Activated CD4-positive, alpha-beta T cell treated with anti-CD3 and anti-CD28 coated beads for 36 hours (primary cell): ENCODE measurements at regions of chr3 and their contacts with region 1.

Region 1: DNA sequence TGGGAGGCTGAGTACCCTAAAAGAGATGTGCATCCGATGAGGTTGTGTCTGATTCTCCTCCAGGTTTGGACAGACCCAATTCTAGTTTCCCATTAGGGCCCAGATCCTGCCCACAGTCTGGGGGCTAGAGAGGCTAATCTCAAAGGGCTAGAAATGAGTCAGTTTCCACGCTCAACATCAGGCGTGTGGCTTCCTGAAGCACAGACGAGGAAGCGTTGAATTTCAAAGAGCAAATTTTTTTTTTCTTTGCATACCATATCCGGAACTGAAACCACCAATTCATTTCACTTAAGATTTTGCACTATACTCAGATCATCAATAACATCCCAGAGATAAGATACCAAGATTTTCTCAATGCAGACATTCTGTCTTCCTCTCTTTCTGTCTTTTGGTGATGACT is 173.8 kb upstream of the BCL6 start:
- DNase-seq: peak; percentile 69
- ATAC-seq: peak; percentile 50
- H3K4me3 Mint-ChIP-seq: peak overlapping the region; percentile 59
- H3K27ac Mint-ChIP-seq: peak overlapping the region; percentile 86
- H3K4me1 Mint-ChIP-seq: peaks cover 70% of the 10 kb centered on the region
- H3K27me3 Mint-ChIP-seq: peaks cover 2% of the 10 kb centered on the region

Region 2: GRCh38 chr3:187777331-187777941 is 141.6 kb before region 1 on chr3:
- CTCF ChIA-PET with region 1: no interaction called
- POLR2A ChIA-PET with region 1: no interaction called
- intact Hi-C with region 1: loop called (anchors 1 kb)
- DNase-seq: peak; percentile 69
- ATAC-seq: peak; percentile 88
- H3K4me3 Mint-ChIP-seq: peak overlapping the region; percentile 27
- H3K27ac Mint-ChIP-seq: peak overlapping the region; percentile 92
- H3K4me1 Mint-ChIP-seq: peaks cover 38% of the 10 kb centered on the region
- H3K27me3 Mint-ChIP-seq: peaks cover 11% of the 10 kb centered on the region

Region 3: DNA sequence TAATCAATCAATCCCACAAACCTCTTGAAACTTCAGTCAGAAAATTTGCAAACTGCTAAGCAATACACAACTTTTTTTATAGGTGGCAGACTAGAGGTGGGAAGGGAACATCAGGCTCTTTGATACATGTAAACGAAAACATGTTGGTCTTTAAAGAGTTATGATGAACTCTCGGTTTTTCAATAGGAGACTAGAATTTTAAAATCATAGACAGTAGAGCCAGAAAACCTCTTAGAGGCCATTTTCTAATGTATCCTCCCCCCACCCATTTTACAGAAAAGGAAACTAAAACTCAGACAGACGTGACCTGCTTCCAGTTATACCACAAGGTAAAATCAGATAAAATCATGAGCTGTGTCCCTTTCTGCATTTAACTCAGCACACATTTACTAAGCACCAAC is 55.8 kb after region 1 on chr3:
- CTCF ChIA-PET with region 1: interaction called, 3 read pairs
- POLR2A ChIA-PET with region 1: interaction called, 5 read pairs
- intact Hi-C with region 1: loop called (anchors 1 kb)
- DNase-seq: no peak
- ATAC-seq: peak; percentile 61
- H3K4me3 Mint-ChIP-seq: peak overlapping the region; percentile 57
- H3K27ac Mint-ChIP-seq: peak overlapping the region; percentile 90
- H3K4me1 Mint-ChIP-seq: peaks cover 57% of the 10 kb centered on the region
- H3K27me3 Mint-ChIP-seq: no peaks in the 10 kb centered on the region

Region 4: DNA sequence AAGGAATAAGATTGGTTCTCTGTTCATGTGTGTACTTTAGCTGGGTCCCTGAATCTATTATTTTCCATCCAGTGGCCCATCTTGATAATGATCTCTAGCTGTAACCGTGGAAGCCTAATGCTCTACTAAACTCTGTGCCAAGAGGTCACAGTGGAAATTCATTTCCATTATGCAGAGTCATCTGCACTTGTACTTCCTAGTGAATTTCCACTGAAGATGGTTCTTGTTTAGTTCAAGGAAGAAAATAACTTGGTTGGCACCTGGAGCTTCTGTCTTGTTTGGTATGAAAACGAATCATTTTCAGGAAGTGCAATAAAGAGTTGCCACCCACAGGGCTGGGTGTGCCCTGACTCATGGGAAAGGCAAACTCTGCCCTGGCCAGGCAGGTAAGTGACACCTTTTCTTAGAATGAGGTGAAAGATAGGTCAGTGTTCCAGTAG is 245.2 kb after region 1 on chr3:
- CTCF ChIA-PET with region 1: interaction called, 3 read pairs
- POLR2A ChIA-PET with region 1: no interaction called
- intact Hi-C with region 1: loop called in 1 of 2 experiments (anchors 2 kb)
- DNase-seq: peak; percentile 52
- ATAC-seq: peak; percentile 24
- H3K4me3 Mint-ChIP-seq: no peak overlapping the region
- H3K27ac Mint-ChIP-seq: peak overlapping the region; percentile 74
- H3K4me1 Mint-ChIP-seq: peaks cover 58% of the 10 kb centered on the region
- H3K27me3 Mint-ChIP-seq: no peaks in the 10 kb centered on the region

Region 5: DNA sequence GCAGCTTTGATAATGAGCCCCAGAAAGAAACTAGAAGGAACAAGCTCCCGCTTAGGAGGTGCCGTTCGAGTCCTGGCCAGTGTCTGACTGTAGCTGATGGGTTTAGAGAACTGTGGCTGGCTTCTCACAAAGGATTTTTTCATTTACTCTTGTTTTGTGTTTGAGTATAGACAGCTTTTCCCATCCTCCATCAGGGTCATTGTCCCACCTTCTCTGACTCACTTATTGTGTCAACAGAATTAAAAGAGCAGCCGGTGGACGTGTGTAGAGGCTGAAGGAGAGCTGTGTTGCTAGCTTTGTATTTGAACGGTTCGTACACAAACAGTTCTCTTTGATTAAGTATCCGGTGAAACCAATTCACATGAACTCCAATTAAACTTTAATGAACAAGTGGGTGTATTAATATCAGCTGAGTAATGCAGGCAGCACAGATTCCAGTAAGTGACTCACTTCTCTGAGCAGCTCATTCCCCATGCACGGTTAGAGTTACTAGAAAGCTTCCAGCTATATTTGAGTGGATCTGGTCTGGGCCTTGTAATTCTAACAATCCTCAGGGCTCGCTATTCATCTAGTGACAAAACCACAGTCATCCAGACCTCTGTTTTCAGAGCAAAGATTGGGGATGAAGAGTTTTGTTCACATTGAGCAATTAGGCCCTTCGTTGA is 375.9 kb after region 1 on chr3:
- CTCF ChIA-PET with region 1: interaction called, 4 read pairs
- POLR2A ChIA-PET with region 1: no interaction called
- intact Hi-C with region 1: loop called (anchors 2 to 5 kb)
- DNase-seq: peak; percentile 29
- ATAC-seq: peak; percentile 37
- H3K4me3 Mint-ChIP-seq: no peak overlapping the region
- H3K27ac Mint-ChIP-seq: peak overlapping the region; percentile 69
- H3K4me1 Mint-ChIP-seq: peaks cover 74% of the 10 kb centered on the region
- H3K27me3 Mint-ChIP-seq: no peaks in the 10 kb centered on the region

Region 6: DNA sequence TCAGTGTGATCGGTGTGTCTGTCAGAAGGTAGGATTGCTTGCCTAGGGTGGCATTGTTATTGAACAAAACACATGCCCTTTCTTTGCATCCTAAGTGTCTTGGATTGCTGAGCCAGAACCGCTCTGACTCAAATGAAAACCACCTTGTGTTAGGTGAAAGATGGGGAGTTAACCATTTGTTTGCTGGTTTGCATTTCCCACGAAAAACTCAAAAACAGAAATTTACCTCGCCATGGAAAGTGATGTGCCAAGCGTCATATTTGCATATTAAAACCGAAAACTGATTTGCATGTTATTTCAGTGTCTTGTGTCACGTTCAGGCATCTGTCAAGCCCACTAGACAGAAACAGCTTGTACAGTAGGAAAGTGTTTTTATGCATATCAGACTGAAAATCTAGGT is 778.1 kb after region 1 on chr3:
- CTCF ChIA-PET with region 1: no interaction called
- POLR2A ChIA-PET with region 1: no interaction called
- intact Hi-C with region 1: loop called (anchors 5 kb)
- DNase-seq: peak; percentile 54
- ATAC-seq: peak; percentile 42
- H3K4me3 Mint-ChIP-seq: no peak overlapping the region
- H3K27ac Mint-ChIP-seq: no peak overlapping the region
- H3K4me1 Mint-ChIP-seq: peaks cover 47% of the 10 kb centered on the region
- H3K27me3 Mint-ChIP-seq: peaks cover 2% of the 10 kb centered on the region